HEK293 (cell line): ENCODE measurements at regions of chr1 and their contacts with region 1.

Region 1: GRCh38 chr1:160951443-160952128 is 3.0 kb downstream of the ITLN2 start:
- H3K4me3 ChIP-seq: no peak overlapping the region
- H3K27ac ChIP-seq: no peak overlapping the region
- H3K4me1 ChIP-seq: no peaks in the 10 kb centered on the region
- CTCF ChIP-seq: peak; percentile 58

Region 2: GRCh38 chr1:160681067-160681890 is 270.3 kb before region 1 on chr1:
- CTCF ChIA-PET with region 1: interaction called, 39 read pairs
- POLR2A ChIA-PET with region 1: no interaction called
- H3K4me3 ChIP-seq: no peak overlapping the region
- H3K27ac ChIP-seq: no peak overlapping the region
- H3K4me1 ChIP-seq: no peaks in the 10 kb centered on the region
- CTCF ChIP-seq: no peak

Region 3: GRCh38 chr1:160777486-160778089 is 174.0 kb before region 1 on chr1:
- CTCF ChIA-PET with region 1: interaction called, 22 read pairs
- POLR2A ChIA-PET with region 1: no interaction called
- H3K4me3 ChIP-seq: no peak overlapping the region
- H3K27ac ChIP-seq: no peak overlapping the region
- H3K4me1 ChIP-seq: no peaks in the 10 kb centered on the region
- CTCF ChIP-seq: no peak

Region 4: GRCh38 chr1:160844447-160845232 is 106.9 kb before region 1 on chr1:
- CTCF ChIA-PET with region 1: interaction called, 25 read pairs
- POLR2A ChIA-PET with region 1: no interaction called
- H3K4me3 ChIP-seq: no peak overlapping the region
- H3K27ac ChIP-seq: no peak overlapping the region
- H3K4me1 ChIP-seq: no peaks in the 10 kb centered on the region
- CTCF ChIP-seq: no peak

Region 5: GRCh38 chr1:160978510-160978927 is 26.9 kb after region 1 on chr1:
- CTCF ChIA-PET with region 1: interaction called, 19 read pairs
- POLR2A ChIA-PET with region 1: no interaction called
- H3K4me3 ChIP-seq: no peak overlapping the region
- H3K27ac ChIP-seq: no peak overlapping the region
- H3K4me1 ChIP-seq: peaks cover 7% of the 10 kb centered on the region; the same call in 1 of the 2 replicates
- CTCF ChIP-seq: no peak